T-cell (primary cell): ENCODE measurements at regions of chr3 and their contacts with region 1.

Region 1: DNA sequence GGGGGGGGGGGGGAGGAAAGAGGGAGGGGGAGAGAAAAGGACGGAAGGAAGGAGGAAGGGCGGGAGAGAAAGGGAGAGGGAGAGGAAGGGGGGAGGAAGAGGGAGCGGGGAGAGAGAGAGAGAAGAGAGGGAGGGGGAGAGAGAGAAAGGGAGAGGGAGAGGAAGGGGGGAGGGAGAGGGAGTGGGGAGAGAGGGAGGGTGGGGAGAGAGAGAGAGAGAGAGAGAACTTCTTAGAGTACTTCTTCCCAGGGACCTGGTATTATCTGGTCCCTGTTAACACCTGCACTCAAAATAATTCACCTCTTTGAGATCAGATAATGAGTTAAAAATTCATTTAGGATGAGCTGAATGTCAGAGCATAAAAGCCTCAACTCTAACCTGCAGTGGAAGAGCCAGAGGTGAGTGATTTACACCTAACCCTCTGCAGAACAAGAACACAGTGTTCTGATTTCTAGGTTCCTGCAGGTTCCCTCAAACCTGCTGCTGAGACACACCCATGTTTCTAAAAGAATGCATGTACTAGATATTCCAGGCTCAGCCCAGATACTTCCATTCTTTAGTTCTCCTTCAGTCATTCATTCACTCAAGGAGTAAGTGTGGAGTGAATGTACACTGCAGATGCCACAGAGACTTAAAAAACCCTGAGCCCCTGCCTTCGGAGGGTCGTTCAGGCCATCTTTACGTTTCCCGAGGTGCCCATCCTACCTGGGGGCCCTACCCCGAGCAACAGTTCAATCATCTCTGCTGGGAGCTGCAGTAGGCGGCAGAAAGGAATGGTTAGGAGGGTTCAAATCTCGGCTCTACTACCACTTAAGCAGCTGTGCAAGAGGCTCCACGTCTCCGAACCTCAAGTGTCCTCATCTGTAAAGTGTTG is 871 bp downstream of the SEC13 start:
- DNase-seq: no peak
- ATAC-seq: peak in 1 of 4 experiments; percentile 3
- H3K4me3 ChIP-seq: peak overlapping the region; percentile 99
- H3K4me3 Mint-ChIP-seq: peak overlapping the region; percentile 89 to 91 (median 89)
- H3K27ac ChIP-seq: peak overlapping the region; percentile 83
- H3K27ac Mint-ChIP-seq: peak overlapping the region; percentile 81 to 86
- H3K4me1 ChIP-seq: peaks cover 4 to 27% of the 10 kb centered on the region in 2 experiments
- H3K4me1 Mint-ChIP-seq: peaks cover 30 to 37% (median 36%) of the 10 kb centered on the region in 3 donors
- H3K27me3 ChIP-seq: no peaks in the 10 kb centered on the region
- H3K27me3 Mint-ChIP-seq: peaks cover 0 to 1% of the 10 kb centered on the region in 2 donors

Region 2: GRCh38 chr3:10099041-10099440 is 221.0 kb before region 1 on chr3:
- CTCF ChIA-PET with region 1: no interaction called
- POLR2A ChIA-PET with region 1: no interaction called
- DNase-seq: no peak
- ATAC-seq: no peak
- H3K4me3 ChIP-seq: no peak overlapping the region
- H3K4me3 Mint-ChIP-seq: no peak overlapping the region
- H3K27ac ChIP-seq: no peak overlapping the region
- H3K27ac Mint-ChIP-seq: no peak overlapping the region
- H3K4me1 ChIP-seq: no peaks in the 10 kb centered on the region
- H3K4me1 Mint-ChIP-seq: no peaks in the 10 kb centered on the region
- H3K27me3 ChIP-seq: no peaks in the 10 kb centered on the region
- H3K27me3 Mint-ChIP-seq: no peaks in the 10 kb centered on the region

Region 3: GRCh38 chr3:10149226-10149625 is 170.8 kb before region 1 on chr3:
- CTCF ChIA-PET with region 1: no interaction called
- POLR2A ChIA-PET with region 1: interaction called in 1 of 2 experiments, 11 read pairs
- DNase-seq: no peak
- ATAC-seq: no peak
- H3K4me3 ChIP-seq: no peak overlapping the region
- H3K4me3 Mint-ChIP-seq: no peak overlapping the region
- H3K27ac ChIP-seq: no peak overlapping the region
- H3K27ac Mint-ChIP-seq: peak overlapping the region in 1 of 2 donors; percentile 44
- H3K4me1 ChIP-seq: peaks cover 10 to 25% of the 10 kb centered on the region in 2 experiments
- H3K4me1 Mint-ChIP-seq: peaks cover 17 to 29% (median 28%) of the 10 kb centered on the region in 3 donors
- H3K27me3 ChIP-seq: no peaks in the 10 kb centered on the region
- H3K27me3 Mint-ChIP-seq: no peaks in the 10 kb centered on the region

Region 4: GRCh38 chr3:10248184-10249080 is 71.6 kb before region 1 on chr3 and contains the start of gene TATDN2:
- CTCF ChIA-PET with region 1: interaction called in 1 of 2 experiments, 11 read pairs
- POLR2A ChIA-PET with region 1: interaction called in 1 of 2 experiments, 4 read pairs
- DNase-seq: peak; percentile 82 to 97 (median 87)
- ATAC-seq: peak; percentile 94 to 97 (median 96)
- H3K4me3 ChIP-seq: peak within 1 kb of the TSS; percentile 96 to 99
- H3K4me3 Mint-ChIP-seq: peak within 1 kb of the TSS; percentile 92 to 99 (median 97)
- H3K27ac ChIP-seq: peak within 1 kb of the TSS; percentile 73
- H3K27ac Mint-ChIP-seq: peak within 1 kb of the TSS; percentile 93 to 97
- H3K4me1 ChIP-seq: peaks cover 23 to 53% of the 10 kb centered on the region in 2 experiments
- H3K4me1 Mint-ChIP-seq: peaks cover 51 to 58% (median 54%) of the 10 kb centered on the region in 3 donors
- H3K27me3 ChIP-seq: no peaks in the 10 kb centered on the region
- H3K27me3 Mint-ChIP-seq: no peaks in the 10 kb centered on the region
- total RNA-seq, gene TATDN2: 58.9 to 82.3 (median 79.9) TPM